ENCODE measurements at regions of chr19 and their contacts with region 1.

Region 1: GRCh38 chr19:54203151-54203611 is 2.5 kb downstream of the RPS9 start:
- DNase-seq: no peak
- ATAC-seq: no peak
- H3K4me3 ChIP-seq: peak overlapping the region; percentile 68
- H3K27ac ChIP-seq: peak overlapping the region; percentile 70
- H3K4me1 ChIP-seq: peaks cover 42 to 51% of the 10 kb centered on the region in 2 experiments
- H3K27me3 ChIP-seq: no peaks in the 10 kb centered on the region
- CTCF ChIP-seq: no peak
- EP300 ChIP-seq: no peak
- POLR2A ChIP-seq: 0 out of 2 replicates have a peak, but pooled peaks have one; percentile 49
- RAD21 ChIP-seq: no peak

Region 2: GRCh38 chr19:54115109-54116063 is 87.8 kb before region 1 on chr19 and contains the starts of genes PRPF31 and TFPT:
- CTCF ChIA-PET with region 1: no interaction called
- POLR2A ChIA-PET with region 1: interaction called, 10 read pairs
- in situ Hi-C with region 1: no loop called
- intact Hi-C with region 1: no loop called
- DNase-seq: peak; percentile 96 to 99 (median 98)
- ATAC-seq: peak; percentile 97
- H3K4me3 ChIP-seq: peak within 1 kb of the TSS; percentile 78
- H3K27ac ChIP-seq: peak within 1 kb of the TSS; percentile 93
- H3K4me1 ChIP-seq: peaks cover 3 to 15% of the 10 kb centered on the region in 2 experiments; a peak in 3 of 5 replicates
- H3K27me3 ChIP-seq: no peaks in the 10 kb centered on the region
- CTCF ChIP-seq: no peak
- EP300 ChIP-seq: peak; percentile 57
- POLR2A ChIP-seq: peak; percentile 95
- RAD21 ChIP-seq: no peak
- polyA plus RNA-seq, gene PRPF31: 5.8 to 12.9 TPM
- polyA plus RNA-seq, gene TFPT: 0.72 to 1.6 TPM

Region 3: DNA sequence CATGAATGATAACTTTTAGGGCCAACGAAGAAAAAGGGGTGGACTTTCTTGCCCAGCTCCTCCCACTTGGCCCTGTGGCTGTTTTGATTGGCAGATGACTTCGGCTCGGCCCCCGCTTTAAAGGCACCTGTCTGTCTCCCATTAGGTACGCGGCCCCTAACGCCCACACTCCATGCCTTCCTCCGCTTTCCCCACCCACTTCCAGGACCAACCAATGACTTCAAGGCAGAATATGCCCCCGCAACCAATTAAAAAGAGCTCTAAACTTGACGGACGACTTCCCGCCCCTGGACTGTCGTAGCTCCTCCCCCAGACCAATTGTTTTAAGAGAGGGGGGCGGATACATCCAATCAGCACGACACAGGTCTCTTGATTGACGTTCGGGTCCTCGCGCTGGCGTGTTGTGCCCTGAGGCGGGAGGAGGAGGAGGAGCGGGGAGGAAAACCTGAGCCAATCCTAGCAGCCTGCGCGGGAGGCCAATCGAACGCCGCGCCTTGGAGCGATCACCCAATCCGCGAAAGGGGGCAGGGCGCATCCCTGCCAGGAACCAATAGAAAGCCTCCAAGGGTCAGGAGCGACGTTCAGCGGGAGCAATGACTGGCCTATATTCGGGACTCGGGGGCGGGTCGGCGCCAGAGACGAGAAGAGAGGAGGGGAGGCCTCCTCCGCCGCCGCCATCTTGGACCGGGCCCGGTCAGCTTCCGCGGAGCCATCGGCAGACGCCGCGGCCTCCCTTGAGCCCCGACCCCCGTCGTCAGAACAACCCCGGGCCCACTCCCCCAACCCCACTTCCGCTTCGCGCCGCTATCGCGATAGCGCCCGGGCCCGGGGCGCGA is 65.9 kb before region 1 on chr19 and contains the start of gene CNOT3:
- CTCF ChIA-PET with region 1: no interaction called
- POLR2A ChIA-PET with region 1: interaction called, 10 read pairs
- in situ Hi-C with region 1: no loop called
- intact Hi-C with region 1: loop called (anchors 2 kb)
- DNase-seq: peak; percentile 94 to 100 (median 97)
- ATAC-seq: peak; percentile 95
- H3K4me3 ChIP-seq: peak within 1 kb of the TSS; percentile 93
- H3K27ac ChIP-seq: peak within 1 kb of the TSS; percentile 97
- H3K4me1 ChIP-seq: peaks cover 14 to 23% of the 10 kb centered on the region in 2 experiments; a peak in 4 of 5 replicates
- H3K27me3 ChIP-seq: no peaks in the 10 kb centered on the region
- CTCF ChIP-seq: peak in 1 of 3 experiments; percentile 7; a peak in 1 of 6 replicates
- EP300 ChIP-seq: no peak
- POLR2A ChIP-seq: peak; percentile 82
- RAD21 ChIP-seq: no peak
- polyA plus RNA-seq, gene CNOT3: 0.27 to 0.46 TPM

Region 4: GRCh38 chr19:54168174-54168917 is 34.8 kb before region 1 on chr19:
- CTCF ChIA-PET with region 1: no interaction called
- POLR2A ChIA-PET with region 1: interaction called, 19 read pairs
- in situ Hi-C with region 1: no loop called
- intact Hi-C with region 1: no loop called
- DNase-seq: peak; percentile 86 to 94 (median 86)
- ATAC-seq: peak; percentile 89
- H3K4me3 ChIP-seq: no peak overlapping the region
- H3K27ac ChIP-seq: no peak overlapping the region
- H3K4me1 ChIP-seq: peaks cover 2 to 50% of the 10 kb centered on the region in 2 experiments; a peak in 2 of 5 replicates
- H3K27me3 ChIP-seq: no peaks in the 10 kb centered on the region
- CTCF ChIP-seq: peak; percentile 83 to 94 (median 88)
- EP300 ChIP-seq: no peak
- POLR2A ChIP-seq: no peak
- RAD21 ChIP-seq: peak; percentile 56 to 83

Region 5: GRCh38 chr19:54179921-54180461 is 23.2 kb before region 1 on chr19:
- CTCF ChIA-PET with region 1: no interaction called
- POLR2A ChIA-PET with region 1: interaction called, 19 read pairs
- in situ Hi-C with region 1: no loop called
- intact Hi-C with region 1: no loop called
- DNase-seq: peak in 2 of 4 experiments; percentile 19 to 25
- ATAC-seq: peak; percentile 63
- H3K4me3 ChIP-seq: no peak overlapping the region
- H3K27ac ChIP-seq: no peak overlapping the region
- H3K4me1 ChIP-seq: peaks cover 0 to 13% of the 10 kb centered on the region in 2 experiments; a peak in 2 of 5 replicates
- H3K27me3 ChIP-seq: no peaks in the 10 kb centered on the region
- CTCF ChIP-seq: peak in 2 of 3 experiments; percentile 23 to 43; a peak in 3 of 6 replicates
- EP300 ChIP-seq: no peak
- POLR2A ChIP-seq: no peak
- RAD21 ChIP-seq: no peak; a peak in 1 of 4 replicates

Region 6: DNA sequence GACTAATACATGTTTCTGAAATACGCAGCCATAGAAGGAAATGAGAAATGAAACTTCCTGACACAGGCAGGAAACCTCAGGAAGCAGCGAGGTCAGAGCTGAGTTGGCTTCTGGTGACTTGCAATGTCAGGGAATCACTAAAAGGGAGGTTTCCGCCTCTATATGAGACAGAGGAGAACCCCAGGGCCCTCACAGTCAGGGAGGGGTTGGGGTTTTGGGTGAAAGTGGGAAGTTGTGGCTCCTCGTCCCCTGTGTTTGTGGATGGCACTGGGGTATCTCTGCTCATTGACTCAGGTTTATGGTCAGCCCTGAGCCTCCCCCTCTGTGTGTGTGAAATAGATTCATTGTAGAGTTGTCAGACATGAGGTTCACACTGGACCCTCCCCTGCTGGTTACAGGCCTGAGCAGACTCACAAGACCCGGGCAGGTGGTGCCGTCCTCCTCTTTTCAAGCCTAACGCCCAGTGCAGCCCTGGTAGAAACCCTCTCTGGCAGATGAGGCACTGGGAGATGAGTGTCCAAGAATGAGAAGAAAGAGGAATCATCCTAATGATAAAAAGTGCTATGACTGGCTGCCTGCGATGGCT is 44.9 kb after region 1 on chr19:
- CTCF ChIA-PET with region 1: no interaction called
- POLR2A ChIA-PET with region 1: no interaction called
- in situ Hi-C with region 1: no loop called
- intact Hi-C with region 1: no loop called
- DNase-seq: no peak
- ATAC-seq: peak; percentile 38; the same call in 2 of the 3 replicates
- H3K4me3 ChIP-seq: no peak overlapping the region
- H3K27ac ChIP-seq: no peak overlapping the region
- H3K4me1 ChIP-seq: no peaks in the 10 kb centered on the region; a peak in 1 of 5 replicates
- H3K27me3 ChIP-seq: peaks cover 41 to 48% of the 10 kb centered on the region in 2 experiments
- CTCF ChIP-seq: no peak
- EP300 ChIP-seq: no peak
- POLR2A ChIP-seq: no peak
- RAD21 ChIP-seq: no peak